MCF 10A (cell line): ENCODE measurements at regions of chr5 and their contacts with region 1.

Region 1: DNA sequence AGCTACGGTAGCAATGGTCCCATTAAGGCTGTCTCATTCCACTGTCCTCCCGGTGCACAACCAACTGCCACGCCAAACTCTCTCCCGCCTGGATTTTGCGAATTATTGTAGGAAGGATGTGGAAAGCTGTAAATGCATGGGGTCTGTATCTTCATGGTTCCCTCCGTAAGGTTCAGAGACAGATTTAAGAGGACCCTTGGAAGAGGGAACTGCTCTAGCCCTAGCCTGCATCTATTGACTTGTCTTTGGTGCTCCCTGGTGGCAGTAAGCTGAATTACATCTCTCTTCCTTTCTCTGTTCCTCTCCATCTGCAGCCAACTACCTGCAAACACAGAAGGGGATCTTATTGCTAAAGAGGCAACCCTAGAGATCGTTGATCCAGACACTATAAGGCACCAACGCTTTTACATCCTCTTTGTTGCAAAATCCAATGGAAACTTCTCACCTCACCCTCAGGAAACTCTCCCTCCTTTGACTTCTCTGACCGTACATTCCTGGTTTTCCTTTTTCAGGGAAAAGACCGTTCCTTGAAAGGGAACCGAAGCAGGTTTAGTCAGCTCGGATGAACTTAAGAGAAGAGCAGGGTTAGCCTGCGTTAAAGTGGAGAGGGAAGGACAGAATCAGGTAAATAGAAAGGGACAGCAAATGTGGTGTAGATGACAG is 11.9 kb downstream of the CAPSL start:
- DNase-seq: peak; percentile 67
- H3K4me3 Mint-ChIP-seq: no peak overlapping the region
- H3K27ac Mint-ChIP-seq: no peak overlapping the region
- H3K4me1 Mint-ChIP-seq: peaks cover 30% of the 10 kb centered on the region
- H3K27me3 Mint-ChIP-seq: peaks cover 39% of the 10 kb centered on the region
- CTCF ChIP-seq: peak; percentile 91

Region 2: GRCh38 chr5:34957857-34958690 is 968.4 kb before region 1 on chr5:
- CTCF ChIA-PET with region 1: interaction called, 9 read pairs
- POLR2A ChIA-PET with region 1: no interaction called
- intact Hi-C with region 1: loop called (anchors 5 kb)
- DNase-seq: peak; percentile 48
- H3K4me3 Mint-ChIP-seq: no peak overlapping the region
- H3K27ac Mint-ChIP-seq: no peak overlapping the region
- H3K4me1 Mint-ChIP-seq: peaks cover 7% of the 10 kb centered on the region
- H3K27me3 Mint-ChIP-seq: no peaks in the 10 kb centered on the region
- CTCF ChIP-seq: peak; percentile 33

Region 3: DNA sequence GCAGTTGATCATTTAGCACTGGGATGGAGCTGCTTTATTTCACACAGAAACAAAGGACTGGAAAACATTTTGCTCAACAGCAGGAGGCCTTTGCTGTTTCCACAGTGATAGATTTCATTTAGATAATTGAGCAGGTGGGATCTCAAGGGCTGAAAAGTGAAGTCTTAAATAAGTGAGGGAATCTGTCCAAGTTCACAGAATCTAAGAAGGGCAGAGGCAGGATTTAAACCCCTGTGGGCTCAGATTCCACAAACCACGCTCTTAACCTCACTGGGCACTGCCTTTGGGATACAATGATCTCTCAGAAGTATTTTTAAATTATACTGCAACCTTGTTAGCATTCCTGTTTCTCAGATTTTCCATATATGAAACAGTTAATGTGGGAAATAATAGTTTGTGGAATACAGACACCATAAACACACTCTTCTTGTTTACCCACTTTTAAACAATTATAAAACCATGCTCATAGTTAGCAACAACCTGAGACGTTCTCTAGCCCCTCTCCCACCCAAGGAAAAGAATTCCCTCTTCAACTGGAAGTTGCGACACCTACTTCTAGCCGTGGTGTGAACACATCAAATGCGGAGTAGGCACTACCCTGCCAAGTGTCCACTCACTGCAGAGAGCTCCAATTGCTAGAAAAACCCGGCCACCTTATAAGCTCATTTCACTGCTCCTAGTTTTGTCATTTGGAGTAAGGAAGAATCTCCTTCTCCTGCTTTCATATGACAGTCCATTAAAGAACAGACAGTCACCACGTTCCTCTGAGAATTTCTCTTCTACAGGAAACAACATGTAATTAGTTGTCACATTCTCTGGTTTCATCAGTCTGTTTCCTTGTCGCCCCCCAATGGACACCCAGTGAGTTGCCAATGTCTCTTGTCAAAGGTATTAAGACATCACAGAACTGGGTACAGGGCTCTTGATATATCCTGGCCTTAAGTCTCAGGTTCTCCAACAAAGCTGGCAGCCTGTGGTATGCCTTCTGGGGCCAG is 743.7 kb before region 1 on chr5:
- CTCF ChIA-PET with region 1: interaction called, 4 read pairs
- POLR2A ChIA-PET with region 1: no interaction called
- intact Hi-C with region 1: loop called (anchors 5 kb)
- DNase-seq: peak; percentile 75
- H3K4me3 Mint-ChIP-seq: no peak overlapping the region
- H3K27ac Mint-ChIP-seq: no peak overlapping the region
- H3K4me1 Mint-ChIP-seq: no peaks in the 10 kb centered on the region
- H3K27me3 Mint-ChIP-seq: peaks cover 20% of the 10 kb centered on the region
- CTCF ChIP-seq: peak; percentile 59

Region 4: GRCh38 chr5:35617435-35618303 is 308.9 kb before region 1 on chr5 and contains the start of gene SPEF2:
- CTCF ChIA-PET with region 1: interaction called, 25 read pairs
- POLR2A ChIA-PET with region 1: no interaction called
- intact Hi-C with region 1: loop called (anchors 1 kb)
- DNase-seq: peak; percentile 86
- H3K4me3 Mint-ChIP-seq: peak within 1 kb of the TSS; percentile 85
- H3K27ac Mint-ChIP-seq: peak within 1 kb of the TSS; percentile 77
- H3K4me1 Mint-ChIP-seq: no peaks in the 10 kb centered on the region
- H3K27me3 Mint-ChIP-seq: no peaks in the 10 kb centered on the region
- CTCF ChIP-seq: peak; percentile 85
- total RNA-seq, gene SPEF2: 5.3 and 5.6 TPM in 2 replicates

Region 5: DNA sequence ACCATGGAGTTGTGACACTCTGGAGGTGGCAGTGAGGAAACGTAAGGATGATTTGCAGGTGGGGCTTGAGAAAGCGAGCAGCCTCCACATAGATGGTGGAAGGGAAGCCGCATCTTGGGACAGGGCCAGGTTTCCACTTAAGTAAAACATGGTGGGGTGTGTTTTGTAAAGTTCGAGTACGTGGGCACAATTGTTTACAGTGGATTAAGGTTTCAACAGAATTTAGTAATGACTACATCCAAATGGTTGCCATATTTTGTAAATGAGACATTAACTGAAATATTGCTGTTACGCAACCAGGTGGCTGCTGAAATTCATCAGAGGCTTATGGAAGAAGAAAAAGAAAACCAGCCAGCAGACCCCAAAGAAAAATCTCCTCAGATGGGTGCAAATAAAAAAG is 155.2 kb before region 1 on chr5:
- CTCF ChIA-PET with region 1: interaction called, 160 read pairs
- POLR2A ChIA-PET with region 1: interaction called, 4 read pairs
- intact Hi-C with region 1: no loop called
- DNase-seq: peak; percentile 96
- H3K4me3 Mint-ChIP-seq: peak overlapping the region; percentile 42
- H3K27ac Mint-ChIP-seq: peak overlapping the region; percentile 41
- H3K4me1 Mint-ChIP-seq: peaks cover 37% of the 10 kb centered on the region
- H3K27me3 Mint-ChIP-seq: no peaks in the 10 kb centered on the region
- CTCF ChIP-seq: no peak

Region 6: GRCh38 chr5:35789732-35790456 is 136.6 kb before region 1 on chr5:
- CTCF ChIA-PET with region 1: interaction called, 30 read pairs
- POLR2A ChIA-PET with region 1: no interaction called
- intact Hi-C with region 1: no loop called
- DNase-seq: no peak
- H3K4me3 Mint-ChIP-seq: no peak overlapping the region
- H3K27ac Mint-ChIP-seq: no peak overlapping the region
- H3K4me1 Mint-ChIP-seq: no peaks in the 10 kb centered on the region
- H3K27me3 Mint-ChIP-seq: no peaks in the 10 kb centered on the region
- CTCF ChIP-seq: no peak

Region 7: DNA sequence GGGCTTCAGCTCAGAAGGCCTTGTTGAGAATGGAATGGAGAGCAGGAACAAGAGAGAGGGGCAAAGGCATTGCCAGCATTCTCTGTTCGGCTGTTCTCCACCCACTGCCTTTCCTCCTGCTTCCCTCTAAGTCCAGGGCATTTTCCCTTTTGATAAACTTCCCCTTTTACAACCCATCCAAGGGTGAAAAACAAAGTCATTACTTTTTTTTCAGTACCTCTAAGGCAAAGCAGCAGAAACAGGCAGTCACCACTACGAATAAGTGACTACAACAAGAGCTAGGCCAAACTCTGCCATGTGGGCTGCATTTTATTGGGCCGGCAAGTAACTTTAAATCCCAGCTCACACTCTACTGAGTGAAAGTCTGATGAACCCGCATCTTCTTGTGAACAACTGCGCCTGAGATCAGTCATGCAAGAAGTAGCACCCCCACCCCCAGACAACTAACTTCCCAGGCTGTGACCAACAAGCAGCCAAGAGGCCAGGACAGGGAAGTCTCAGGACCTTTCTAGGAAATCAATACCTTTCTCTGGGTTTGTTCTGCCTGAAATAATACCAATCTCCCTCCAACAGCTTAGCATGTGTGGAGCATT is 56.7 kb before region 1 on chr5:
- CTCF ChIA-PET with region 1: no interaction called
- POLR2A ChIA-PET with region 1: no interaction called
- intact Hi-C with region 1: no loop called
- DNase-seq: no peak
- H3K4me3 Mint-ChIP-seq: no peak overlapping the region
- H3K27ac Mint-ChIP-seq: no peak overlapping the region
- H3K4me1 Mint-ChIP-seq: no peaks in the 10 kb centered on the region
- H3K27me3 Mint-ChIP-seq: no peaks in the 10 kb centered on the region
- CTCF ChIP-seq: no peak